B cell (primary cell): ENCODE measurements at regions of chr6 and their contacts with region 1.

Region 1: GRCh38 chr6:227074-227782 is 65.1 kb upstream of the DUSP22 start:
- DNase-seq: peak; percentile 78
- ATAC-seq: peak; percentile 92
- H3K4me3 ChIP-seq: no peak overlapping the region
- H3K4me3 Mint-ChIP-seq: peak overlapping the region; percentile 42
- H3K27ac ChIP-seq: no peak overlapping the region
- H3K27ac Mint-ChIP-seq: peak overlapping the region; percentile 20
- H3K4me1 ChIP-seq: peaks cover 28 to 34% of the 10 kb centered on the region in 2 donors
- H3K4me1 Mint-ChIP-seq: peaks cover 43% of the 10 kb centered on the region
- H3K27me3 ChIP-seq: no peaks in the 10 kb centered on the region
- H3K27me3 Mint-ChIP-seq: no peaks in the 10 kb centered on the region
- CTCF ChIP-seq: peak; percentile 45

Region 2: DNA sequence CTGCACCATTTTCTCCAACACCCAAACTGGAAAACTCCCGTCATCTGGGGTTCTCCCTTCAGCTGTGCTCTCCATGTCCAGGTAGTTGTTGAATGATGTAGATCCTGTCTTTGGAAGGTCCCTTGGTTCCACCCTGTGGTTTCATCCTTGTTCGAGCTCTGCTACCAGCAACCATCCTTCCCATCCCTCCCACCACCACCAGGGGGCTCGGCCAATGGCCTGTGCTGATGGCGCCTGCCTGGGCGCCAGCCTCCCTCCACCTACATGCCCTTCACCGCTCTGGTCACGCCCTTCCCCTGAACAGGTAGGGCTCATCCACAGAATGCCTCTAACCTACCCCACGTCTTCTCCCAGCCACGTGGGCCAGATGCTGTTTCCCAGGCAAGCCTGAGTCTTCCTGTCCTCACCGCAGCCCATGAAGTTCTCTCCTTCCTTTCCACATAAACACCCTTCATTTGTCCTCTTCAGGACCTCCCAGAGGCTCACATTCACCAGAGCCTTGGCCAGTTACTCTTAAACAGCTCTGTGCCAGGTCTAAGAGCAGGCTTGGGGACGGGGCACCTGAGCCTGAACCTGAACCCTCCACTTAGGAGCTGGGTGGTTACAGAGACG is 10.1 kb before region 1 on chr6:
- CTCF ChIA-PET with region 1: interaction called, 18 read pairs
- POLR2A ChIA-PET with region 1: no interaction called
- intact Hi-C with region 1: no loop called
- DNase-seq: peak; percentile 49
- ATAC-seq: no peak
- H3K4me3 ChIP-seq: no peak overlapping the region
- H3K4me3 Mint-ChIP-seq: peak overlapping the region; percentile 58
- H3K27ac ChIP-seq: no peak overlapping the region
- H3K27ac Mint-ChIP-seq: peak overlapping the region; percentile 44
- H3K4me1 ChIP-seq: peaks cover 43 to 62% of the 10 kb centered on the region in 2 donors
- H3K4me1 Mint-ChIP-seq: peaks cover 69% of the 10 kb centered on the region
- H3K27me3 ChIP-seq: peaks cover 0 to 2% (median 0%) of the 10 kb centered on the region in 4 experiments
- H3K27me3 Mint-ChIP-seq: no peaks in the 10 kb centered on the region
- CTCF ChIP-seq: peak; percentile 50

Region 3: DNA sequence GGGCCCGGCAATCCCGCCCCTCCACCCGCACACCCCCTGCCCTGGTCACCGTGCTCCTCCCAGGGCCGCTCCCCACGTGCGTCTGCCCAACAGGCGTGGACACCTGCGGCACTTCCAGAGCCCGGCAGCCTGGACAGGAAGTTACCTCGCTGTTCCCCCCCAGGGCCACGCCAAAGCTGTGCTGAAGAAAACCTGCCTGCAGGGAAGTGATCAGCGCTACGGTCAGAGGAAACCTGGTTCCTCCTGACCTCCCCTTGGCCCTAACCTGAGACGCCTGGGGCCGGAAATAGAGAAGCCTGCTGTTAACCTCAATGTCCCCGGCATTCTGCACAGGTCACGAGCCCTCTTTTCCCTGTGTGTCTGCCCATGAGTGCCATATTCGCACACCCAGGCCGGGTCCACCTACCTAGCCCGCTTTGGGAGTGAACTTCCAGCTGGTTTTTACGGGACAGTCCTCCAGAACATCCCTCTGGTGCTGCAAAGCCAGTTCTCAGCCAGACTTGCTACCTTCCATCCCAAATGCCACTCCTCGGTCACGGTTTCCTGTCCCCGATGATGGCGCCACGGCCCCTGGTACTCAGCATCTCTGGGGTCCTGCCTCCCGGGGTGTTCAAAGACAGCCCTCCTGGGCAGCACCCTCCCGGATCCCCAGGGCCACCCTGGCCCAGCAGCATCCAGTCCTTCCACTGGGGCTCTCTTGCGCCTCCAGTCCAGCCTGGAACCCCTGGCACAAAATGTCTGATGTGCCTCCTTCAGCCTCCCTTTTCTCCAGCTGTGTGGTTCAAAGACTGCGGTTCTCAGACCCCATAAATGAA is 152.3 kb after region 1 on chr6:
- CTCF ChIA-PET with region 1: no interaction called
- POLR2A ChIA-PET with region 1: no interaction called
- intact Hi-C with region 1: loop called (anchors 5 kb)
- DNase-seq: peak; percentile 57
- ATAC-seq: peak; percentile 37
- H3K4me3 ChIP-seq: no peak overlapping the region
- H3K4me3 Mint-ChIP-seq: peak overlapping the region; percentile 26
- H3K27ac ChIP-seq: no peak overlapping the region
- H3K27ac Mint-ChIP-seq: peak overlapping the region; percentile 56
- H3K4me1 ChIP-seq: peaks cover 44 to 46% of the 10 kb centered on the region in 2 donors
- H3K4me1 Mint-ChIP-seq: peaks cover 42% of the 10 kb centered on the region
- H3K27me3 ChIP-seq: no peaks in the 10 kb centered on the region
- H3K27me3 Mint-ChIP-seq: no peaks in the 10 kb centered on the region
- CTCF ChIP-seq: no peak

Region 4: DNA sequence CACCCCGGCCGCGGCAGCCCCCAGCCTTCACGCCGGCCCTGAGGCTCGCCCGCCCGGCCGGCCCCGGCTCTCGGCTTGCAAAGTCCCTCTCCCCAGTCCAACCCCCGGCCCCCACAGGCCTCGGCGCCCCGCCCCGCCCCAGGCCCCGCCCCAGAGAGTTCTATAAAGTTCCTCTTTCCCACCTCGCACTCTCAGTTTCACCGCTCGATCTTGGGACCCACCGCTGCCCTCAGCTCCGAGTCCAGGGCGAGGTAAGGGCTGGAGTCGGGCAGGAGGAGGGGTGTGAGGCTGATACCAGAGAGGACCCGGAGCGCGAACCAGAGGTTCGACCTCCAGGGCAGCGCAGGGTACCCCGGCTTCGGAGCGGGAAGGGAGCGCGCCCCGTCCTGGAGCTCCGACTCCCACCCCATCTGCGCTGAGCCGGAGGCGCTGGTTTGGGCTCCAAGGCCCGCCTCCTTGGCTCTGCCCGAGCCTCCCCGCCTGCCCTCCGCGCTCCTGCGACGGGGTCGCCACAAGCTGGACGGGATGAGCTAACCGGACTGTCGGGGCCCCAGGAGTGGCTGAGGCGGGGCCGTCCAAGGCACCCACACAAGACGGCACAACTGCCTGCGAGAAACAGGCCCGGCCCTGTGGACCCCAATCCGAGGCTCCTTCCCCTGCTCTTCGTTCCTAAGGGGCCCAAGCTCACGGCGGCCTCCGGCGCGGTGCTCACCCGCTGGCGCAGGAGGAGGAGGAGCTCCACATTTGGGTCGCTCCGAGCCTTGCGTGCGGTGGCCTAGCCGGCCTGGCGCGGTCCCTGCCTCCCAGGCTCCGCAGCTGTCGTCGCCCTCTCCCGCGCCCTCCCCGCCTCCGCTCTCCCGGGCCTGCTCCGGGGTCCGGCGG is 164.6 kb after region 1 on chr6 and contains the start of gene IRF4:
- CTCF ChIA-PET with region 1: interaction called, 36 read pairs
- POLR2A ChIA-PET with region 1: interaction called, 21 read pairs
- intact Hi-C with region 1: loop called (anchors 1 kb)
- DNase-seq: peak; percentile 90
- ATAC-seq: peak; percentile 70
- H3K4me3 ChIP-seq: peak within 1 kb of the TSS; percentile 63 to 98 (median 93)
- H3K4me3 Mint-ChIP-seq: peak within 1 kb of the TSS; percentile 95
- H3K27ac ChIP-seq: peak within 1 kb of the TSS; percentile 71 to 82
- H3K27ac Mint-ChIP-seq: peak within 1 kb of the TSS; percentile 99
- H3K4me1 ChIP-seq: peaks cover 35 to 43% of the 10 kb centered on the region in 2 donors
- H3K4me1 Mint-ChIP-seq: peaks cover 51% of the 10 kb centered on the region
- H3K27me3 ChIP-seq: no peaks in the 10 kb centered on the region
- H3K27me3 Mint-ChIP-seq: no peaks in the 10 kb centered on the region
- CTCF ChIP-seq: no peak
- total RNA-seq, gene IRF4: 129 and 142 TPM in 2 replicates

Region 5: GRCh38 chr6:399785-400534 is 172.7 kb after region 1 on chr6:
- CTCF ChIA-PET with region 1: interaction called, 16 read pairs
- POLR2A ChIA-PET with region 1: no interaction called
- intact Hi-C with region 1: no loop called
- DNase-seq: peak; percentile 89
- ATAC-seq: peak; percentile 70
- H3K4me3 ChIP-seq: peak overlapping the region in 1 of 5 experiments; percentile 7
- H3K4me3 Mint-ChIP-seq: peak overlapping the region; percentile 69
- H3K27ac ChIP-seq: peak overlapping the region; percentile 75 to 84
- H3K27ac Mint-ChIP-seq: peak overlapping the region; percentile 87
- H3K4me1 ChIP-seq: peaks cover 76 to 87% of the 10 kb centered on the region in 2 donors
- H3K4me1 Mint-ChIP-seq: peaks cover 89% of the 10 kb centered on the region
- H3K27me3 ChIP-seq: no peaks in the 10 kb centered on the region
- H3K27me3 Mint-ChIP-seq: no peaks in the 10 kb centered on the region
- CTCF ChIP-seq: no peak

Region 6: GRCh38 chr6:408599-409102 is 181.4 kb after region 1 on chr6:
- CTCF ChIA-PET with region 1: interaction called, 16 read pairs
- POLR2A ChIA-PET with region 1: no interaction called
- intact Hi-C with region 1: loop called (anchors 2 kb)
- DNase-seq: peak; percentile 60
- ATAC-seq: no peak
- H3K4me3 ChIP-seq: no peak overlapping the region
- H3K4me3 Mint-ChIP-seq: no peak overlapping the region
- H3K27ac ChIP-seq: peak overlapping the region in 1 of 2 donors; percentile 89
- H3K27ac Mint-ChIP-seq: peak overlapping the region; percentile 81
- H3K4me1 ChIP-seq: peaks cover 17 to 19% of the 10 kb centered on the region in 2 donors
- H3K4me1 Mint-ChIP-seq: peaks cover 44% of the 10 kb centered on the region
- H3K27me3 ChIP-seq: no peaks in the 10 kb centered on the region
- H3K27me3 Mint-ChIP-seq: no peaks in the 10 kb centered on the region
- CTCF ChIP-seq: peak; percentile 74

Region 7: DNA sequence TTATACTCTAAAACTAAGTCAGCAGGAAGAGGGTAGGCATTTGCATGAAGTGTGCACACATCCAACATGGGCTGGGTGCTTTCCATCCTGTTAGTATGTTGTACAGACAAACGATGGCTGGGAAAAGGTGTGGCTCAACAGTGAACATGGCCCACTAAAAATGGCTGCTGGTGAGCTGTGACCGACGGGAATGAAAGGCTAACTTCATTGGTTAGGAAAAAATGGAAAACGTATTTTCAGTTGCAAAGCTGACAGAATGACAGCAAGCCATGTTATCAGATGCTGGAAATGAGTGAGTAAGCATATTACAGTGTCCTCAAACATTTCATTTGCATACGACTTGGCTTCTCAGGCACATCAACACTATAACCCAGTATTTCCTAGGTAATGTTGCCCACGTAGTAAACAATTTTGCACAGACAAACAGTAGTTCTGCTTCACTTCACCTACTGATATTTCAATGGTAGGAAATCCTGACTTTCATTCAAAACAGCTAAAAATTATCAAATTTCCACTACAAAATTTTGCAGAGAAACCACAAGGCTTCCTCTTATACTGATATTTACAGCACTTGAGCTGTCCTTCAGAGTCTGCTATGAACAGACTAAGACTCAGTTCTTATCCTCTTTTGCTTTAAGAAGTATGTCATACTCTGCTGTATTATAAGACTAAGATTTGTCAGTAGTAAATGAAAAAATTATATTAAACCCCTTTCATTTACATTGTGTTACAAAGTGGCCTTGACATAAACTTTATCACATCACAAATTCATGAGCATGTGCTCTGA is 263.2 kb after region 1 on chr6:
- CTCF ChIA-PET with region 1: interaction called, 4 read pairs
- POLR2A ChIA-PET with region 1: no interaction called
- intact Hi-C with region 1: loop called (anchors 5 kb)
- DNase-seq: peak; percentile 56
- ATAC-seq: peak; percentile 29
- H3K4me3 ChIP-seq: peak overlapping the region in 1 of 5 experiments; percentile 8
- H3K4me3 Mint-ChIP-seq: peak overlapping the region; percentile 52
- H3K27ac ChIP-seq: peak overlapping the region; percentile 51 to 55
- H3K27ac Mint-ChIP-seq: peak overlapping the region; percentile 89
- H3K4me1 ChIP-seq: peaks cover 47 to 56% of the 10 kb centered on the region in 2 donors
- H3K4me1 Mint-ChIP-seq: peaks cover 58% of the 10 kb centered on the region
- H3K27me3 ChIP-seq: no peaks in the 10 kb centered on the region
- H3K27me3 Mint-ChIP-seq: no peaks in the 10 kb centered on the region
- CTCF ChIP-seq: no peak